ENCODE measurements at regions of chr3 and their contacts with region 1.

Region 1: GRCh38 chr3:52144034-52144795 is 10.0 kb downstream of the POC1A start:
- DNase-seq: peak; percentile 27 to 89
- H3K4me3 ChIP-seq: no peak overlapping the region
- H3K4me1 ChIP-seq: no peaks in the 10 kb centered on the region
- H3K27me3 ChIP-seq: no peaks in the 10 kb centered on the region

Region 2: DNA sequence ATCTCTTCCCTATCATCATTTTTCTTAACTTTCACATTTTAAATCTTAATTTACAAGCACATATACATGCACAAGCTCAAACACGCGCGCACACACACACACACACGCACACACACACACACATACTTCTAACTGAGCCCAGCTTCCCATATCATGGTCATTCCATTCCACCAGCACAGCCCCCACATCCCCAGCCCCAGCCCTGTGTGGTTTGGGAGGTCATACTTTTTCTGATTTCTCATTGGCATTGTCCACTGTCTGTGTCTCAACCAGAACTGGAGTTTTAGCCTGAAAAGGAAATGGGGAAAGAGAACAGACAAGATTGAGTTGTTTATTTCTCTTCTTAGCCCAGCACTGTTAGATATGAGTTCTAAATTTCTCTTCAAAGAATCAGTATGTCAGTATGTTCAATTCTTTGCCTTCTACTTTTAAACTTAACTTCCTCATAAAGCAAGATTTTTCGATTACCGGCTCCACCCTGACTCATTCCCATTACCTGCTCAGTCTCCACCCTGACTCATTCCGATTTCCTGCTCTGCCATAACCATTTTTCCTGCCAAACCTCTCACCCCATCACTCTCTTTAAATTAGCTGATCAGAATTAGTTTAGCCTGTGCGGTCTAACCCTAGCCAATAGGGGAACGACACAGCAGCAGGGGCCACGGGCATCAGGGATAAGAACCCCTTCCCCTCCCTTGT is 247.5 kb before region 1 on chr3:
- in situ Hi-C with region 1: no loop called
- DNase-seq: no peak
- H3K4me3 ChIP-seq: no peak overlapping the region
- H3K4me1 ChIP-seq: no peaks in the 10 kb centered on the region
- H3K27me3 ChIP-seq: peaks cover 22% of the 10 kb centered on the region

Region 3: GRCh38 chr3:52001443-52001974 is 142.7 kb before region 1 on chr3:
- in situ Hi-C with region 1: loop called (anchors 5 kb)
- DNase-seq: peak; percentile 75 to 93
- H3K4me3 ChIP-seq: no peak overlapping the region
- H3K4me1 ChIP-seq: peaks cover 2% of the 10 kb centered on the region; the same call in 1 of the 2 replicates
- H3K27me3 ChIP-seq: no peaks in the 10 kb centered on the region

Measured in HAP-1 (cell line).